HepG2 (cell line): ENCODE measurements at regions of chr12 and their contacts with region 1.

Region 1: DNA sequence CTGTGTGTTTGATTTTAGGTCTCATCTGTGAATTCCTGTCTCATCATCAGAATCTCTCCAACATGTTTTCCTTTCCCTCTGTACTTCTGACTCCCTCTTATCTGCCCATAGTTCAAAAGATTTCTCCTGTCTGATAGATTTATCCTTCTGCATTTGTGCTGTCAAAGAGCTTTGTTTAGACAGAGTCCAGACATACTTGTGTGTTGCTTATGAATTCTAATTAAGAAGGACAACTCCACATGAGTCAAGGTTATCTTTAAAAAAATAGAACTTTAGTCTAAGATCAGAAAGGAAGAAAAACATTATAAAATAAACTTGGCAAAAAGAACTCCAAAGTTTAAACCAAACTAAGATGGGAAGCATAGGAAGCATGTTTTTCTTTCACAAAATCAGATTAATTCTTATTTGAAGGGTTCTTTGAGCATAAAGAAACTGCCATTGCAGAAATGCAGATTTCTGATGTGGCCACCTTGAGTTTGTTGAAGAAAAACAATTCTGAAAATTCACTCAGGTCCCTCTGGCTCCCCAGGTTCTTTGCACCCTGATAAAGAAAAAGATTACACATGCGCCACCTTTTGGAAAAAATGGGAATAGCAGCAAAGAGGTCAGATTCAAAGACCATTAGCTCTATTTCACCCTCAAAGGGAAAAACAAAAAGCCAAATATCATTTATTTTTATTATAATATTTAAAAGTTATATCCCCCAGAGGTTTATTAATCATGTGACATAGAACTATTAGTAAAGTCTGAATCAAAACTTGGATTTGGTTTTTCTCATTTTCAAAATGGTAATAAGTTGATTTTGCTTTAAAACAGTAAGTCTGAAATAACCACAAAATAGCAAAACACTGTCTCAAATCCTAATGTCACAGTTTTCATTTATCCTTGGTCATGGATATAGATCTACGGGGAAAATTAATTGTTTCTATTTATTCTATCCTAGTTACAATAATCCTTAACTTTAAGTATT is 143.7 kb upstream of the DCN start:
- DNase-seq: peak; percentile 34
- ATAC-seq: peak; percentile 47; the same call in 2 of the 3 replicates
- H3K4me3 ChIP-seq: no peak overlapping the region
- H3K27ac ChIP-seq: no peak overlapping the region
- H3K4me1 ChIP-seq: no peaks in the 10 kb centered on the region
- H3K27me3 ChIP-seq: no peaks in the 10 kb centered on the region; a peak in 1 of 5 replicates
- CTCF ChIP-seq: peak; percentile 51
- EP300 ChIP-seq: no peak
- POLR2A ChIP-seq: no peak
- RAD21 ChIP-seq: no peak

Region 2: GRCh38 chr12:90959538-90960139 is 366.7 kb before region 1 on chr12:
- CTCF ChIA-PET with region 1: no interaction called
- POLR2A ChIA-PET with region 1: no interaction called
- in situ Hi-C with region 1: loop called (anchors 25 kb)
- intact Hi-C with region 1: no loop called
- DNase-seq: peak; percentile 26
- ATAC-seq: peak; percentile 74
- H3K4me3 ChIP-seq: no peak overlapping the region
- H3K27ac ChIP-seq: no peak overlapping the region
- H3K4me1 ChIP-seq: no peaks in the 10 kb centered on the region
- H3K27me3 ChIP-seq: no peaks in the 10 kb centered on the region
- CTCF ChIP-seq: peak; percentile 69
- EP300 ChIP-seq: no peak
- POLR2A ChIP-seq: no peak
- RAD21 ChIP-seq: no peak

Region 3: DNA sequence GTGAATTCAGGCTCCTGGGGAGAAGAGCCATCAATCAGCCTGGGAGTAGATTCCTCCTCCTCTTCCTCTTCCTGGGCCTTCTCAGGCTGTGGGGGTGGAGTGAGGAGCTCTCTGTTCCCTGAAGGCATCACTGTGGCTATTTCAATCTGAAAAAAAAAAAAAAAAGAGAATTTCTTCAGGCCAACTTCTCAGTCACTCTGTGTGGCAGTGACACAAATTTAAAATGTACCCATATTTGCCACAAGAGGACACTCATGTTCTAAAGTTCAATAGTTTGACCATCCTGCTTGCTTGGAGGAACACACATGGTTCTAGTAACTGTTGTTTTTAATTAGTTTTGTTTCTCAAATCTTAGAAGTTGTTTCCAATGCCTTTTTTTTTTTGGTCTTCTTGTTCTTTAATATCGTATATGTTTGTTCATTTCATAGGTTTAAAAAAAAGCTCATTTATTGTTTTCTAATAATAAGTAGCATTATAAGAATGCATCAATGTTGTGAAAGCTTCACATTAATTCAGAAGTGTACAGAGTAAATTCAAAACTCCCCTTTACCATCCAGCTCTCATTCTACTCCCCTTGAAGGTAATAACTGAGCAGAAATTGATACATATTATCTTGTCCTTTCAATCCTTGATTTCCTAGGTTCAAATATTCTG is 348.1 kb before region 1 on chr12:
- CTCF ChIA-PET with region 1: interaction called, 8 read pairs
- POLR2A ChIA-PET with region 1: no interaction called
- in situ Hi-C with region 1: loop called (anchors 25 kb)
- intact Hi-C with region 1: loop called (anchors 1 kb)
- DNase-seq: peak; percentile 16
- ATAC-seq: peak; percentile 77
- H3K4me3 ChIP-seq: no peak overlapping the region
- H3K27ac ChIP-seq: no peak overlapping the region
- H3K4me1 ChIP-seq: no peaks in the 10 kb centered on the region
- H3K27me3 ChIP-seq: no peaks in the 10 kb centered on the region
- CTCF ChIP-seq: peak; percentile 64
- EP300 ChIP-seq: no peak
- POLR2A ChIP-seq: no peak
- RAD21 ChIP-seq: no peak

Region 4: DNA sequence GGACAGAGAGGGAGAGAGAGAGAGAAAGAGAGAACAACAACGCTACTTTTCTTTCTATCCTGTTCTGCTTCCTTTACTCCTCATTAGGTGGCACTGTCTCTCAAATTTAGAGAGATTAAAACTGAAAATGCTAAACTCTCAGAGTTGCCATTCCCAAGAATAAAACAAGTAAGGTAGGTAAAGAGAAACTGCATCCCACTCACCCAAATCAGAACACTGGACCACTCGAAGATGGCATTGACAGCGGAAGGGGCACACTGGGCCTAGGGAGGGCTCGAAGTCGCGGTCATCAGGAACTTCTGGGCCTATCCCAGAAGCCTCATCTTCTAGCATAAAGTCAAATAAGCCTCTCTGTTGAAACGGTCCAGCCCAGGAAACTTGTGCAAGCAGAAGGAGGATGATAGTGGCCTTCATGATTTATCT is 148.2 kb before region 1 on chr12:
- CTCF ChIA-PET with region 1: no interaction called
- POLR2A ChIA-PET with region 1: no interaction called
- in situ Hi-C with region 1: no loop called
- intact Hi-C with region 1: loop called (anchors 1 kb)
- DNase-seq: peak; percentile 6
- ATAC-seq: peak; percentile 60; the same call in 2 of the 3 replicates
- H3K4me3 ChIP-seq: 0 out of 6 replicates have a peak overlapping the region, but pooled peaks of 1 of the 3 experiments have one; percentile 28
- H3K27ac ChIP-seq: no peak overlapping the region
- H3K4me1 ChIP-seq: no peaks in the 10 kb centered on the region
- H3K27me3 ChIP-seq: no peaks in the 10 kb centered on the region
- CTCF ChIP-seq: peak; percentile 33
- EP300 ChIP-seq: no peak
- POLR2A ChIP-seq: no peak
- RAD21 ChIP-seq: no peak